Endothelial cell of umbilical vein (primary cell): ENCODE measurements at regions of chr16 and their contacts with region 1.

Region 1: GRCh38 chr16:86519649-86520316 is 9.5 kb downstream of the FOXF1 start:
- DNase-seq: peak; percentile 65
- H3K4me3 ChIP-seq: no peak overlapping the region
- H3K27ac ChIP-seq: no peak overlapping the region
- H3K4me1 ChIP-seq: peaks cover 5% of the 10 kb centered on the region
- H3K27me3 ChIP-seq: peaks cover 24 to 28% of the 10 kb centered on the region in 2 experiments
- CTCF ChIP-seq: peak; percentile 86 to 89
- POLR2A ChIP-seq: no peak

Region 2: GRCh38 chr16:85821441-85822135 is 698.2 kb before region 1 on chr16:
- CTCF ChIA-PET with region 1: interaction called, 7 read pairs
- POLR2A ChIA-PET with region 1: no interaction called
- dilution Hi-C with region 1: no loop called
- intact Hi-C with region 1: loop called (anchors 1 kb)
- DNase-seq: peak; percentile 67
- H3K4me3 ChIP-seq: no peak overlapping the region
- H3K27ac ChIP-seq: no peak overlapping the region
- H3K4me1 ChIP-seq: no peaks in the 10 kb centered on the region
- H3K27me3 ChIP-seq: peaks cover 0 to 2% of the 10 kb centered on the region in 2 experiments
- CTCF ChIP-seq: peak; percentile 90 to 95
- POLR2A ChIP-seq: no peak

Region 3: DNA sequence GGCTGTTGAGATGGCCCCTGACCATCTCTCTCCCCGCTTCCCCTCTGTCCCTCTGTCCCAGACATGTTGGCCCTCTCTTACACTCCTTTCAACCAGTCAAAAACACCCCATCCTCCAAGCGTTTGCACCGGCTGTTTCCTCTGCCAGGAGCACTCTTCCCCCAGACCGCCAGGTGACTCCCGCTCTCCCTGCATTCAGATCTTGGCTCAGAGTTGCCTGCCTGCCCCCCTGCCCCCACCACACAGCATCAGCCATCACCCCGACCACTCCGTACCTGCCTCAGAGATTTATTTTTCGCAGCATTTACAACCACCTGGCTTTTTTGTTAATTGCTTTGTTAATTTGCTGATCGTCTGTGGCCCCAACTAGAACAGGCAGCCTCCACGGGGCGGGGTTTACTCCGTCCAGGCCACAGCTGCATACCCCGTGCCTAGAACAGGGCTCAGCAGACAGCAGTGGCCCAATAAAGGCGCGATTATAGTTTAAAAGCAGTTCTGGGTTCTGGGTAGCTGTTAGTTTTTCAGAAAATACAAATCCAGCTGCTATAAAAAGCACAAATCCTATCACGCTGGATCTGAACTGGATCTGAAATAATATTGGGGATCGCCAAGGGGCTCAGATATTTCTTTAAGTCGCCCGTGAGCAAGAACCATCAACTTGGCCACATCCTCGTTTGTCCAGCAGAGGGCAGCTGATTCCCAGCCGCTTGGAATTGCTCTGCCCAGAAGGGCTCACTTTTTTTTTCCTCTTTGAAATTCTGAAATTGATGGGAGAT is 447.3 kb before region 1 on chr16:
- CTCF ChIA-PET with region 1: interaction called, 238 read pairs
- POLR2A ChIA-PET with region 1: no interaction called
- dilution Hi-C with region 1: no loop called
- intact Hi-C with region 1: loop called (anchors 1 kb)
- DNase-seq: peak; percentile 75
- H3K4me3 ChIP-seq: no peak overlapping the region
- H3K27ac ChIP-seq: no peak overlapping the region
- H3K4me1 ChIP-seq: peaks cover 9% of the 10 kb centered on the region
- H3K27me3 ChIP-seq: peaks cover 0 to 2% of the 10 kb centered on the region in 2 experiments
- CTCF ChIP-seq: peak; percentile 75 to 85
- POLR2A ChIP-seq: no peak

Region 4: DNA sequence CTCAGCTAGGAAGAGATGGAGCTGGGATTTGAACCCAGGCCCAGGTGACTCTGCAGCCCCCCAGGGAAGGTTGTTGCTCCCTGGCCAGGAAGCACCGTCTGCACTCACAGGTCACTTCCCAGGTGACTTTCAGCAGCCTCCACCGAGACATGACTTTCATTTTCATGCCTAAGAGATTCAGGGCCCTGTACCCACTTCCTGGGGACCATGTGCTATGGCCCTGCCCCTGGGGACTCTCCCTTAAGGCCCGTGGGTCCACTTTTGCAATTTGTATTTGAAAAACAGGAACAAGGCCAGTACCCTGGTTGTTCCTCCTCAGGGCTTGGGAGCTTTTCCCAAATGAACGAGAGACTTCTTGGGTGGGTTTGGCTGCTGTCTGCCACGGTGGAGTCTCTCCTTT is 429.8 kb before region 1 on chr16:
- CTCF ChIA-PET with region 1: interaction called, 5 read pairs
- POLR2A ChIA-PET with region 1: no interaction called
- dilution Hi-C with region 1: loop called (anchors 10 kb)
- intact Hi-C with region 1: no loop called
- DNase-seq: no peak
- H3K4me3 ChIP-seq: no peak overlapping the region
- H3K27ac ChIP-seq: no peak overlapping the region
- H3K4me1 ChIP-seq: no peaks in the 10 kb centered on the region
- H3K27me3 ChIP-seq: no peaks in the 10 kb centered on the region
- CTCF ChIP-seq: no peak
- POLR2A ChIP-seq: no peak

Region 5: DNA sequence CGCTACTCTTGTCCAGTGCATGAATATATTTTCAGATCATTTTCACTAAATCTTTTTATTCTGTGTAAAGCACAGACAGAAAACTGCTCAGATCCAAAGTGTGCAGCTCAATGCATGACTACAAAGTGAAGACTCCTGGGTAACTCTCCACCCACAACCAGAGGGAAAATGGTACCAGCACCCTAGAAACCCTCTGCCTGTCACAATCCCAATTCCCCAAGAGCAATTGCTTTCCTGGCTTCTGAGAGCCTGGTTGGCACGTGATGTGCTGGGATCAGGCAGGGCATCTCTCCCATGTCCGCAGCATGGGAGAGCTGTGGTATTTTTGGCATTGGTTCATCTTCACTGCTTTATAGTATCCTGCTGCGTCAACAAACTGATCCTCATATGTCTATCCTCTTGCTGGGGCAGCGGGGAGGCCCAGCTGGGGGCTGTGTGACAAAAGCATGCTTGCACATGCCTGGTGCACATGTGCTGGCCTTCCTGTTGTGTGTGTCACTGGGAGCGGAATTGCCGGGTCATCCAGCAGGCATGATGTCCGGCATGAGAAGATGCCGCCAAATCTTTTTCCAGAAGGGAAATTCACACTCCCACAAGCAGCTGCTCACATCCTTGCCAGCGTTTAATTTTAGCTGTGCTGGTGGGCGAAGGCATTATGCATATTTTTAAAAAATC is 288.3 kb before region 1 on chr16:
- CTCF ChIA-PET with region 1: no interaction called
- POLR2A ChIA-PET with region 1: no interaction called
- dilution Hi-C with region 1: no loop called
- intact Hi-C with region 1: no loop called
- DNase-seq: no peak
- H3K4me3 ChIP-seq: no peak overlapping the region
- H3K27ac ChIP-seq: no peak overlapping the region
- H3K4me1 ChIP-seq: no peaks in the 10 kb centered on the region
- H3K27me3 ChIP-seq: no peaks in the 10 kb centered on the region
- CTCF ChIP-seq: no peak
- POLR2A ChIP-seq: no peak

Region 6: DNA sequence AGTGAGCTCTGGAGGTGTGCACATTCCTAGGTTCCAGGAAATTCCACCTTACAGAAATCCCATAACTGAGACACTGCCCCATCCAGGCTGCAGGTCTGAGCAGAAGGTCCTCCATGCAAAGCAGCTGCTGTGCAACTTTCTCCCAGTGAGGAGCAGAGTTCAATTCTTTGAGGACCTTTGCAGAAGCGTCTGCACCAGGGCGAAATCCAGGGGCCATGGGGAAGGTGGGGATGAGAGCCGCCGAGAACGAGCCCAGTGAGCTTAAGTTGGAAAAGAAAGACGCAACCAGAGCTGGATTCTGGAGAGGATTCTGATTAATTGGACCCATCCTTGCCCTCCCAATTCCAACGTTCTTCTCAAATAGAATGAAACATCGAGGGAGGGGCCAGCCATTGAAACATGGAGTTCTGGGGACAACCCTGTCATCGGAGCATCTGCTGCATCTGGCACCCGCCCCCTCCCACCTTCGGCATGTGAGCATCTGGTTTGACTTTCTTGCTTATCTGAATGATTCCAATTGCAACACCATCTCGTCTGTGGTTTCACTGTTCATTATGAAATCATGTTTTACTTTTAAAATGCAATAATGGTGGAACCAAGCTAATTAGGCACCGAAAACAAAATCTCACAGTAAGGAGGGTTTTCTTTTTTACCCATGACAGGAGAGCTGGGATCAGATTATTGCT is 200.1 kb before region 1 on chr16:
- CTCF ChIA-PET with region 1: interaction called, 10 read pairs
- POLR2A ChIA-PET with region 1: no interaction called
- dilution Hi-C with region 1: no loop called
- intact Hi-C with region 1: no loop called
- DNase-seq: no peak
- H3K4me3 ChIP-seq: no peak overlapping the region
- H3K27ac ChIP-seq: no peak overlapping the region
- H3K4me1 ChIP-seq: no peaks in the 10 kb centered on the region
- H3K27me3 ChIP-seq: peaks cover 0 to 7% of the 10 kb centered on the region in 2 experiments
- CTCF ChIP-seq: no peak
- POLR2A ChIP-seq: no peak

Region 7: DNA sequence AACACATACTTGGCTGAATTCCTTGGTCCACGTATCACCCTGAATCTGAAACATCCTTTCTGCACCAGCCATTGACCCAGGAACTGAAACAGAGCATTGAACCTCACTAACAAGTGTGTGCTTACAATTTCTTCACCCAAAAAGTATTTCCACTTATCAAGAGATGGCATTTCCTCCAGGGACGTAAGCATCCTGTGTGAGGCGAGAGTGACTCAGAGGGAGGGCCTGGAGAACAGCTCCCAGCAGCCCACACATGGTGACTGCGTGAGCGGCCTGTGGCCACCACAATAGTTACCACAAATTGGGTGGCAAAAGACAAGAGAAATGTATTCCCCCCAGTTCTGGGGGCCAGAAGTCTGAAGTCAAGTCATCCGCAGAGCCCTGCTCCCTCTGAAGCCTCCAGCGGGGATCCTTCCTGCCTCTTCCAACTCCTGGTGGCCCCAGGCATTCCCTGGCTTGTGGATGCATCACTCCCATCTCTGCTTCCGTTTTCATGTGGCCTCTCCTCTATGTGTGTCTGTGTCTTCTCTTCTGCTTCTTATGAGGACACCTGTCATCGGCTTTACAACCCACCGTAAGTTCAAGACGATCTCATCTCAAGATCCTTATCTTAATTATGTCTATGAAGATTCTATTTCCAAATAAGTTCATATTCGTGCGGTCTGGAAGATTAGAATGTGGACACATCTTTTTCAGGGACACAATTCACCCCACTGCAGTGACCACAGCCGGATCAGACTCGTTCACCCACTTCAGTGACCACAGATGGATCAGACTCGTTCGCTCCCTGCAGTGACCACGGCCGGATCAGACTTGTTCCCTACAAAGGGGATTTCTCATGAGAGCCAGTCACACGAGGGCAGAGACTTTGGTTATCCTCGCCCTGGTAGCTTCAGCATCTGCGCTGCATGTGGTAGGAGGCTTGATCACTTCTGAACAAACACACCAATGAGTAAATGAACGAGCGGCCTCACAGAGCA is 132.0 kb before region 1 on chr16:
- CTCF ChIA-PET with region 1: interaction called, 11 read pairs
- POLR2A ChIA-PET with region 1: no interaction called
- dilution Hi-C with region 1: no loop called
- intact Hi-C with region 1: no loop called
- DNase-seq: peak; percentile 89
- H3K4me3 ChIP-seq: no peak overlapping the region
- H3K27ac ChIP-seq: peak overlapping the region; percentile 89
- H3K4me1 ChIP-seq: peaks cover 64% of the 10 kb centered on the region
- H3K27me3 ChIP-seq: no peaks in the 10 kb centered on the region
- CTCF ChIP-seq: no peak
- POLR2A ChIP-seq: peak; percentile 38